Caco-2 (cell line): ENCODE measurements at regions of chr6 and their contacts with region 1.

Region 1: DNA sequence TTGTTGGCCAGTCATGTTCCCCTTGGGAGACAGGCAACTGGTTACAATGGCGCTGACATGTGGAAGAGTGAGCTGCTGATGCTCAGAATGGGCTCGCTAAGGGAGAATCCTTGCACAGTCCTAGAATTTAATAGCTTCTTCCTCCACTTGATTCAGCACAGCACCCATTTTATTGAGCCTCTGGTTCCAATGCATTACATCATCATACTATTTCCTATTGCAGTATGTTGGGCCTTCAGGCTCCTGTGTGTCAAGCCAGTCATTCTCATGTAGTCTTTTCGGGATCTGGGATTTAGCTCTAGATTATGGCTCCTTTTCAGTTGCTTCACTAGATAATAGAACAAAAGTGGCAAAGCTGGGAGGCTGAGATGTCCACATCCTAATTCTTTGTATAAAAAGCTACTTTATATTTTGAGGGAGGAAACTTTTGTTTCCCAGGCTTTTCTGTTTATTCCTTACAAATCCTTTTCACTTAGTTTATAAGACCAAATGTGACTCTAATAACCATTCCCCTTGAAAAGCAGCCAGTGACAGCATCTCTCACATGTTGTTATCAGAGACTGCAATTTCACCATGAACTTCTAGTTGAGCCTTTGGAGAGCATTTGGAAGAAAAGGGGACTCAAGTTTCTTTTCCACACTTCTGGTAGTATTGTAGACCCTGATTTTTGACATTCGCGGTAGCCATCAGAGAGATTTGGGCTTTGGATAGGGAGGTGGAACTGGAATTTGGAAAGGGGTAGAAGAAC is 215.6 kb downstream of the RNF144B start:
- DNase-seq: no peak
- H3K4me3 ChIP-seq: no peak overlapping the region
- H3K4me3 Mint-ChIP-seq: no peak overlapping the region
- H3K27ac Mint-ChIP-seq: no peak overlapping the region
- H3K4me1 ChIP-seq: no peaks in the 10 kb centered on the region
- H3K4me1 Mint-ChIP-seq: no peaks in the 10 kb centered on the region
- H3K27me3 ChIP-seq: no peaks in the 10 kb centered on the region
- H3K27me3 Mint-ChIP-seq: peaks cover 13% of the 10 kb centered on the region
- CTCF ChIP-seq: no peak

Region 2: DNA sequence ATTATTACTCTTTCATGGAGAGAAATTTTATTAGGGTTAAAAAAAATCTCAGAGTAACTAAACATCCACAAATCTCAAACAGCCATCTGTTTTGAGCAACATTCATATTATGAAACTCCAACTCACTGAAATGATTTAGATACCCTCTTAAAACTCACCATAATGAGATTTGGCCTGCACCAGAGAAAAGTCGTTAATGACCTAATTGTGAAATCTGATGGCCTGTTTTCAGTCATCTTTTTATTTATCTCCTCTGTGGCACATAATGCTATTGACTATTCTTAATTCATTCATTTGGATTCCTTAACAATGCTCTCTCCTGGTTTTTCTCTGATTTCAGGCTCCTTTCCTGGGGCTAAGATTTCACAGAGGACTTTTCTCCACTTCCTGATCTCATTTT is 22.9 kb before region 1 on chr6:
- CTCF ChIA-PET with region 1: no interaction called
- POLR2A ChIA-PET with region 1: no interaction called
- intact Hi-C with region 1: loop called (anchors 1 kb)
- DNase-seq: no peak
- H3K4me3 ChIP-seq: no peak overlapping the region
- H3K4me3 Mint-ChIP-seq: no peak overlapping the region
- H3K27ac Mint-ChIP-seq: no peak overlapping the region
- H3K4me1 ChIP-seq: no peaks in the 10 kb centered on the region
- H3K4me1 Mint-ChIP-seq: no peaks in the 10 kb centered on the region
- H3K27me3 ChIP-seq: no peaks in the 10 kb centered on the region
- H3K27me3 Mint-ChIP-seq: peaks cover 7% of the 10 kb centered on the region
- CTCF ChIP-seq: no peak